OCI-LY7 (cell line): ENCODE measurements at regions of chr6 and their contacts with region 1.

Region 1: DNA sequence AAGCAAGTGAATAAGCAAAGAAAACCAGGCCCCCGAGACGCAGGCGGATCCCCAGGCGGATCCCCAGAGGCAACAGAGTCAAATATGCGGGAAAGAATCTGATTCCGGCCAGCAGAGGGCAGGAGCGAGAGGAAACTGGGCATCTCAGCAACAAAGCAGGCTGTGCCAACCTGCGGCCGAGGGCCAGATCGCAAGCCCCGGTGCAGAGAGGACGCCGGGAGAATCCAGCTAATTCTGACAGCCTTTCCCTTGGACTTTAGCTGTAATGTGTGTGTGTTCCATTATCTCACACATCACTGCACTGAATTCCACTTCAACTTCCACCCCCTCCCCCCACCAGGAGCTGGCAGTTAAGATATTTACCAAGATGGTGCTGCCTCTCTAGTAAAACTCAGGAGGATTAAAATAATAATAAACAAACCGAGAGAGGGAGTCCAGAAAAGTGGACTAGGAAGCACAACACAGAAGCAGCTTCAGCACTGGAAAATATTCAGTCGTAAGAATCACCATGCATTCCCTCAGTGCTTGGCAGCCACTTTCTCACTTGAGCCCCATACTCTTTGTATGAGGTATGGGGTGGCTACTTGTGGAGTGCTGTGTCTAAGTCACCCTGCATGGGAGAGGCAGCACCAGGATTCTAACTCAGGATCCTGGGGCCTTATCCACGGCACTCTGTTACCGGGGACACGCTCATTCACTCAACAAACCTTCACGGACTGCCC is 66.2 kb upstream of the SNX9 start:
- DNase-seq: peak; percentile 74
- H3K4me3 ChIP-seq: no peak overlapping the region
- H3K27ac ChIP-seq: no peak overlapping the region
- H3K4me1 ChIP-seq: peaks cover under 1% of the 10 kb centered on the region
- CTCF ChIP-seq: peak; percentile 85

Region 2: DNA sequence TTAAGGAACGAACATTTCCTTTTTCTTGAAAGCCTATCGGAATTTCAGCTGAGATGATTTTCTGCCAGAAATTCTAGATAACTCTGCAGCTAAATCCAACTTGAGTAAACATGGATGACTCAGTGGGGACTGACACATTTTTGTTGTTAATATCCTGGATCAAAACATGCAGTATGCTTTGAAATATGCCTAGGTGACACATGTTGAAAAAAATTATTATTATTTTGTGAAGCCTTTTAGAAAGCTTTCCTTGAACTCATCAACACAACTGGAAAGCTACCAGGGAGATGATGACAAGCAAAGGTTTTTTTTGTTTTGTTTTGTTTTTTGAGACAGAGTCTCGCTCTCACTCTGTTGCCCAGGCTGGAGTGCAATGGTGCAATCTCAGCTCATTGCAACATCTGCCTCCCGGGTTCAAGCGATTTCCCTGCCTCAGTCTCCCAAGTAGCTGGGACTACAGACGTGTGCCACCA is 73.9 kb before region 1 on chr6:
- CTCF ChIA-PET with region 1: no interaction called
- POLR2A ChIA-PET with region 1: no interaction called
- intact Hi-C with region 1: no loop called
- DNase-seq: no peak
- H3K4me3 ChIP-seq: no peak overlapping the region
- H3K27ac ChIP-seq: no peak overlapping the region
- H3K4me1 ChIP-seq: no peaks in the 10 kb centered on the region
- CTCF ChIP-seq: no peak

Region 3: DNA sequence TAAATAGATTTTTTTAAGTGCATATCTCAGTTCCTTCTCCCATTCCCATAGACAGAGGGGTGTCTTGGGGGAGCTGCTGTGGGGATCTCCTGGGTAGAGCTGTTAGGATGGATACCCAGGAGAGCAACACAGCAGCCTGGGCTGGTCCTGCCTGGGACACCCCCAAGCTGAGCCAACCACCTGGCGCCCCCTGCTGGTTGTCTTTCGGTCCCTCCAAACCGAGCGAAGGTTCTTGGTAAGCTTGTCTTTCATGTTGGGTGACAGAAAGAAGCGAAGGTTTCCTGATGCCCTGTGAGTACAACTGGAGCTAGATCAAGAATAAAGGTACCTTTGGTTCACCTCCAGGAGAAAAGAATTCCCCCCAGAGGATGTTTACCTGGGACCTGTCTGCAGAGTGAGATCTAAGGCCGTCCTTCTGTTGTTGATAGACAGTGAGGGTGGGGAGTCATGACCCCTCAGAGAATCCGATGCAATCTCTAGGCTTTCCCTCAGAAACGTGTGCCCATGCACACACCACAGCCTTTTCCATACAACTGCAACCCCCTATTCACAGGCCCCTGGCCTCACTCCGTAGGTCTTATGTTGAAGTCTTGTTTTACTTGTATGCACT is 117.0 kb after region 1 on chr6:
- CTCF ChIA-PET with region 1: interaction called, 7 read pairs
- POLR2A ChIA-PET with region 1: no interaction called
- intact Hi-C with region 1: loop called (anchors 1 kb)
- DNase-seq: peak; percentile 78
- H3K4me3 ChIP-seq: no peak overlapping the region
- H3K27ac ChIP-seq: no peak overlapping the region
- H3K4me1 ChIP-seq: no peaks in the 10 kb centered on the region
- CTCF ChIP-seq: peak; percentile 94

Region 4: GRCh38 chr6:157946865-157947532 is 190.1 kb after region 1 on chr6:
- CTCF ChIA-PET with region 1: no interaction called
- POLR2A ChIA-PET with region 1: interaction called, 3 read pairs
- intact Hi-C with region 1: loop called (anchors 1 kb)
- DNase-seq: peak; percentile 27
- H3K4me3 ChIP-seq: no peak overlapping the region
- H3K27ac ChIP-seq: no peak overlapping the region
- H3K4me1 ChIP-seq: no peaks in the 10 kb centered on the region
- CTCF ChIP-seq: peak; percentile 69

Region 5: DNA sequence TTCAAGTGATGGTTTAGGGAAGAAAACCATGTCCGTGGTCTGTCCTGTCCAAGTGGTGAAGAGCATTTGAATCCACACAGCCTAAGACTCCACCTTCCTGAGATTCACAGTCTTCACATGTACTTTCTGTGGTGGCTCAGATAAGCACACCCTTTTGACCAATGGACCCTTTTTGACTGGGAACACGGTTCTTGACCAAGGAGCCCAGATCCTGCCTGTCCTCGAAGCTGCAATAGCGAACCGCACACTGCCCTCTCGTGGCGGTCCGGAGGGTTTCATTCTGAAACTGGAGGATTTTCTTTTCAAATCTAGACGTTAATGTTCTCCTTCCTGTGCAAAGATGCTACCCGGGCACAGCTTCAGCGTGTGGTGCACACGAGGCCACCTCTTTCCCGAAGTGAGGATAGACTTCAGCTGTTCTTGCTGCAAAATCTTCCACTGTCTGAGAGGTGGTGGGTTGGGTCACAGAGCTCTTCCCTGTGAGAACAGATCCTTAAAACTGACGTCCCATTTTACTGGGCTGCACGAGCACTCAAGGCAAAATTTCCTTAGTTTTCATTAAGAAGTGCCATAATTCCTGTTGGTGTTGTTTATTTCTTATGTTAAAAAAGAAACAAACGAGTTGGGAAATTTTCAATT is 315.3 kb after region 1 on chr6:
- CTCF ChIA-PET with region 1: no interaction called
- POLR2A ChIA-PET with region 1: no interaction called
- intact Hi-C with region 1: loop called (anchors 5 kb)
- DNase-seq: peak; percentile 58
- H3K4me3 ChIP-seq: no peak overlapping the region
- H3K27ac ChIP-seq: no peak overlapping the region
- H3K4me1 ChIP-seq: no peaks in the 10 kb centered on the region
- CTCF ChIP-seq: peak; percentile 90

Region 6: GRCh38 chr6:158605266-158605878 is 848.5 kb after region 1 on chr6:
- CTCF ChIA-PET with region 1: no interaction called
- POLR2A ChIA-PET with region 1: no interaction called
- intact Hi-C with region 1: no loop called
- DNase-seq: peak; percentile 67
- H3K4me3 ChIP-seq: no peak overlapping the region
- H3K27ac ChIP-seq: no peak overlapping the region
- H3K4me1 ChIP-seq: no peaks in the 10 kb centered on the region
- CTCF ChIP-seq: peak; percentile 85